Endothelial cell of umbilical vein (primary cell): ENCODE measurements at regions of chr11 and their contacts with region 1.

Region 1: DNA sequence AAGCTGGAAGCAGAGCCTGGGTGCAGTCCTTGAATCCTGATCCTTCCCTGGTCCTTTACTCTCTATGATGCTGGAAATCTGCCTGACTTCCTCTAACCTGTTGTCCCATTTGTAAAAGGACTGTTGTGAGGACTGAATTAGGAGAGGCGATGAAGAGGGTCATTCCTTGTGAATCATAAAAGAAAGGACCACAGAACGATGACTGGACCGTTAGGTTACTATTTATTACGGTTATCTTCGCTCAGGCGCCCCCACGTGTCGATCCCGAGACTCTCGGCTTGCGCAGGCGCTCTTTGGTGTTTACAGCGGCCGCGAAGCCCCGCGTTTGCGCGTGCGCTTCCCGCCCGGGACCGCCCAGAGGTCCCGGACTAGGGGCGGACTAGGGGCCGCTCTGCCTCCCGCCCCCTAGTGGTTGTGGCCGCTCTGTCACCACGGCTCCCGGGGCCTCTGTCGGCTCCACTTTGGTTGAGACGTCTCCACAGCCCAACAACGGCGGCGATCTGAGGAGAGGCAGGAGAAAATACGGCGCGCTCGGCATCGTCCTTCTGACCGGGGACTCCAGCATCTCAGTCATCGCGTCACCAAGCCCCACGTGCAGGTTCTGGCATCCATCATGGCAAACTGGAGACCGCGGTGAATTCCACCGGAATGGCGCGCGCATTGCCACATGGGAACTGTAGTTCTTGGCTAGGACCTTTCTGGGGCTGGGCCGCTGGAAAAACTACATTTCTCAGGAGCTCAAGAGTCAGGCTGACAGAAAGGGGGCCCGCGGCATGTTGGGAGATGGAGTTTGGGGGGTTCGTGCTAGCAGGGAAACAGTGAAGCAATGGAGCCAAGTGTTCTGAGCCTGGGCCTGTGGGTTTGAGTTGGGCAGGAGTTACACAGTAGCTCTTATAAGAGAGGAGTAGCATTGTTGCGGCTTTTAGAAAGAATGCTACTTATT is at the start of gene STARD10:
- DNase-seq: peak; percentile 96
- H3K4me3 ChIP-seq: peak within 1 kb of the TSS; percentile 66 to 85 (median 71)
- H3K27ac ChIP-seq: peak within 1 kb of the TSS; percentile 84
- H3K4me1 ChIP-seq: peaks cover 3% of the 10 kb centered on the region
- H3K27me3 ChIP-seq: no peaks in the 10 kb centered on the region
- CTCF ChIP-seq: peak; percentile 99
- POLR2A ChIP-seq: peak; percentile 75
- total RNA-seq, gene STARD10: 14.4 and 16.1 TPM in 2 replicates

Region 2: DNA sequence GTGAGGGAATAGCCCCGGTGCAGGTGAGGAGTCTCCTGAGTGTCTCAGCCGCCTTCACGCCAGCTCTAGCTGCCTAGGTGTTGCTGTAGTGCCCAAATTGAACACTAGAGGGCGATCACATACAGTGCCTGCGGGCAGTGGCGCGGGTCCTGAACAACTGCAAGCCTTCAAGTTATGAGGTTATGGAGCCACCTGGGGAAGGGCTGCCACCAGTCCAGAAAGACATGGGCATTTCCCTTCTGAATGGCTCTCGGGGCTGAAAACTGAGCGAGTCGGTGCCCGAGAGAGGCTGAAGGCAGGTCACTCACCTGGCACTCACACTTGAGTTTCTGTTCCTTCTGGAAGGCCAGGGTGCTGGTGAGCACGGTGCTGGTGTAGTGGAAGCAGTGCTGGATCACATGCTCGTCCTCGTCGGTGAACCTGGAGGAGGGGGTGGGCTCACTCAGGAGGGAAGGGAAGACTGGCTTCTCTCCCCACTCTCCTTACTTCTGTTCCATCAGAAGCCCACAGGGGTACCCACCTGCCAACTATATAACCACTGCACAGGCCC is 207.9 kb before region 1 on chr11:
- CTCF ChIA-PET with region 1: no interaction called
- POLR2A ChIA-PET with region 1: no interaction called
- dilution Hi-C with region 1: no loop called
- intact Hi-C with region 1: loop called (anchors 5 kb)
- DNase-seq: peak; percentile 69
- H3K4me3 ChIP-seq: no peak overlapping the region
- H3K27ac ChIP-seq: no peak overlapping the region
- H3K4me1 ChIP-seq: no peaks in the 10 kb centered on the region
- H3K27me3 ChIP-seq: peaks cover 2 to 6% of the 10 kb centered on the region in 2 experiments
- CTCF ChIP-seq: peak; percentile 83 to 86
- POLR2A ChIP-seq: no peak

Region 3: DNA sequence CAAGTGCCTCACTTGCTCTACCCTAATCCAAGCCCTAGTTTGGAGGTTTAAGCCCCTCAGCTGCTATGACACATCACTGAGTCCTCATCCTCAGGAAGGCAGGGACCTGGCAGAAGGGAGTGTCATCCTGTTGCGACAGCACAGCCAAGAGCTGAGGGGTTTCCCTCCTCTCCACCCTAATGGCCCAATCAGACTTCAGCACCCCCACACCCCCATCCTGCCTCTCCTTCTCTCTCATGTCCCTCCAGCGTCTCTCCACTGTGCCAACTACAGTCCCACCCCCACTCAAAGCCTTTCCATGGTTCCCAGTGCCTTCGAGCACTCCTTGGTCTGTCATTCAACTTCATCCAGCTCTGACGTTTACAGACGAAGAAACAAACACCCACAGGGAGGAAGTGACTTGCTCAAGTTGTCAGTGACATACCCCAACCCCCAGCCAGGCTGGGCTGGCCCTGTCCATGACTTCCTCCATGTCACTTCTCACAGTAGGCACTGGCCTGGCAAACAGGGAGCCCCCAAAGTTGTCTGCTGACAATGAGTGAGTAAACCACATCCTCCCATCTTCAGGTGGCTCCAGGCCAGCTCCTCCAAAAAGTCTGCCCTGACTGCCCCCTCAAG is 57.1 kb before region 1 on chr11:
- CTCF ChIA-PET with region 1: interaction called, 10 read pairs
- POLR2A ChIA-PET with region 1: no interaction called
- dilution Hi-C with region 1: no loop called
- intact Hi-C with region 1: no loop called
- DNase-seq: peak; percentile 47
- H3K4me3 ChIP-seq: no peak overlapping the region
- H3K27ac ChIP-seq: peak overlapping the region; percentile 69
- H3K4me1 ChIP-seq: peaks cover 20% of the 10 kb centered on the region
- H3K27me3 ChIP-seq: no peaks in the 10 kb centered on the region
- CTCF ChIP-seq: no peak
- POLR2A ChIP-seq: no peak

Region 4: DNA sequence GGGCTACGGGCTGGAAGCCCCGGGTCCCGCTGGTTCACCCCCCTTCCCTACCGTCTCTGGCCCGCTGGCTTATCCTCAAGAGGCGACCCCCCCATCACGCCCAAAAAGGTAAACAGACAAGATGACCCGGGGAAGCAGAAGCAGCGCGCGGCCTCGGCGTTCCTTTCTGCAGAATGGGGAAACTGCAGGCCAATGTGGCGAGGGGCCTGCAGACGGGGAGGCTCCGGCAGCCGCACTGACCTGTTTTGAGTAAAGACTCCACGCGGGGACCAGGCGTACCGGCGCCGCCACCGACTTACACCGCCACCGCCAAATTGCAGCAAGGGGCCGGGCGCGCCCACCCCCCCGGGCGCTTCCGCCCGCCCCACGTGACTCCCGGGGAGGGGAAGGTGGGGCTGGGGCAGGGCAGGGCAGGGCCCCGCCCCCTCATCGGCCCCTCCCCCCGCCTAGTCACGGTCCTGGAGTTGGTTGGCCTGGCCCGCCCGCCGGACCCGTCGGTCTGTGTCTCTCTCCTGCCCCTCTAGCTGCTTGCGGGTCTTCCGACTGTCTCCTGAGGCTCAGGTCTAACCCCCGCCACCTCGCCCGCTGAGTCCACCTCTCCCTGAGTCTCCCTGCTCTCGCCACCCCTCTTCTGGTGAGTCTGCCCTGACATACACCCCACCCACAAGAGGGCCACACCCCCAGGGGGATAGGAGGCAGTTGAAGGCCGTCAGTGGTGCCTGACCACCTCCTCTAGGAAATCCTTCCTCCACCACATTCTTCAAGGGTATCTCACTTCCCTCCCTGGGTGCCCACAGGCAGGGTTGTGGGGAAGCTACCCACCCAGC is 41.4 kb before region 1 on chr11 and contains the start of gene ARAP1:
- CTCF ChIA-PET with region 1: interaction called, 5 read pairs
- POLR2A ChIA-PET with region 1: no interaction called
- dilution Hi-C with region 1: no loop called
- intact Hi-C with region 1: loop called (anchors 1 kb)
- DNase-seq: peak; percentile 64
- H3K4me3 ChIP-seq: peak within 1 kb of the TSS; percentile 59 to 77 (median 62)
- H3K27ac ChIP-seq: peak within 1 kb of the TSS; percentile 21
- H3K4me1 ChIP-seq: peaks cover 12% of the 10 kb centered on the region
- H3K27me3 ChIP-seq: no peaks in the 10 kb centered on the region
- CTCF ChIP-seq: no peak
- POLR2A ChIP-seq: peak; percentile 42
- total RNA-seq, gene ARAP1: 66.2 and 78.3 TPM in 2 replicates

Region 5: DNA sequence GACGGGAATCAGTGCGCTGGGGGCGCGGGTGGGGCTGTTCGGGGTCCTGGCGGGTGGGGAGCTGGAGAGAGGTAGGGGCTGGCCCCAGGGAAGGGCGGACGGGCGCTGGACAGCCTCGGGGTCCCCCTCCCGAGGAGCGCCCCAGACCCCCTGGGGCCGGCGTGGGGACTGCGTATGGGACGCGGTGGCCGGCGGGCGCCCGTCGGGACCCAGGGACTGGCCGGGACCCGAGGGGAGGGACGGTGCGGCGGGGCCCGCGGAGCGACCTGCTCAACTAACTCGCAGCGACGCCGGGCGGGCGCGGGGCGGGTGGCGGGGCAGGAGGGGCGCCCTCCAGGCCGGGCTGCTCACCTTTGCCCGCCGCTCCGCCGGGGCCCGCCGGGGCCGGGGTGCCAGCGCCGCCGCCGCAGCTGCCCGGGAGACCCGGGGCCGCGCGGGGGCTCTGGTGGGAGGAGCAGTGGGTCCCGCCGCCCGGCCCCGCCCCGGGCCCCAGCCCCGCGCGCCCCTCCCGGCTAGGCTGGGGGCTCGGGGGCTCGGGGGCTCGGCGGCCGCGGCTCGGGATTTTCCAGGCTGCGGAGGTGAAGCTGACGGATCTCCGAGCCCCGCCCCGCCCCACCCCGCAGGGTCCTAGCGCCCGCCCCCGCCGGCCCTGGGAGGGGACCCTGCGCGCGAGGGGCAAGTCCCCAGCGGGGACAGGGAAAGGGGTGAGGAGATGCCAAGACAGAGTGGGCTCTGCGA is 12.2 kb before region 1 on chr11:
- CTCF ChIA-PET with region 1: interaction called, 16 read pairs
- POLR2A ChIA-PET with region 1: no interaction called
- dilution Hi-C with region 1: no loop called
- intact Hi-C with region 1: no loop called
- DNase-seq: no peak
- H3K4me3 ChIP-seq: peak overlapping the region in 1 of 3 experiments; percentile 50
- H3K27ac ChIP-seq: no peak overlapping the region
- H3K4me1 ChIP-seq: peaks cover 3% of the 10 kb centered on the region
- H3K27me3 ChIP-seq: no peaks in the 10 kb centered on the region
- CTCF ChIP-seq: no peak
- POLR2A ChIP-seq: no peak

Region 6: DNA sequence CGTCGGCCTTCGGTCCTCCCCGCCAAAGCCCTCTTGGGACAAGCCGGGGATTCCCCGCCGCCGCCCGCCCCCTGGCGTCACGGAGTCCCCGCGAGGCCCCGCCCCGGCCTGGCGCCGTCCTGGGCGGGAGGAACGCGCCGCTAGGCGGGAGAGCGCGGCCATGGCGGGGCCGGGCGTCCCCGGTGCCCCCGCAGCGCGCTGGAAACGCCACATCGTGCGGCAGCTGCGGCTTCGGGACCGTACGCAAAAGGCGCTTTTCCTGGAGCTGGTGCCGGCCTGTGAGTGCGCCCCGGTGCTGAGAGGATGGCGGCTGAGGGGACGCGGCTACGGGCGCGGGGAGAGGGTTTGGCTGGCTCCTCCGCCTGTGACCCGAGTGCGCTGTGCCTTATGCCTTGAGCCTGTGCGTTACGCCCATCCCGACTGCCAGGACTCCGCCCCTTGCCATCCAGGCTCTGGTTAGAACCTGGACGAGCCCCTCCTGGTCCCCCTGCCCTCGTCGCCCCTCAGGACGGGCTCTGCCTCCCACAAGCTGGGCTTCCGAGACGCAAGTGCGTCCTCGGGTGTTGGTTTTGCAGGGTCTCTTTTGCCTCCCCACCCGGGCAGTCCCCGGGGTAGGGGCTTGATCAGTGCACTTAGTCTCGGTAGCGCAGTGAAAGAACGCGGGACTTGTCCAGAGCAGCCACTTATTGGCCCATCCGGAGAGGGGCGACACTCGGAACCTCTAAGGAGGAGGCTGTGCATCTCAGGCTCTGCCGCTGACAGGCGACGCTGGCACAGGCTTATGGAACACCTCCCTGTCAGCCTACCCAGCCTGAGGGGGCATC is 20.8 kb after region 1 on chr11 and contains the start of gene ATG16L2:
- CTCF ChIA-PET with region 1: interaction called, 25 read pairs
- POLR2A ChIA-PET with region 1: no interaction called
- dilution Hi-C with region 1: no loop called
- intact Hi-C with region 1: loop called (anchors 1 kb)
- DNase-seq: peak; percentile 91
- H3K4me3 ChIP-seq: peak within 1 kb of the TSS; percentile 17 to 88 (median 56)
- H3K27ac ChIP-seq: peak within 1 kb of the TSS; percentile 67
- H3K4me1 ChIP-seq: peaks cover 31% of the 10 kb centered on the region
- H3K27me3 ChIP-seq: no peaks in the 10 kb centered on the region
- CTCF ChIP-seq: no peak
- POLR2A ChIP-seq: peak; percentile 68
- total RNA-seq, gene ATG16L2: 24.7 and 26.5 TPM in 2 replicates

Region 7: DNA sequence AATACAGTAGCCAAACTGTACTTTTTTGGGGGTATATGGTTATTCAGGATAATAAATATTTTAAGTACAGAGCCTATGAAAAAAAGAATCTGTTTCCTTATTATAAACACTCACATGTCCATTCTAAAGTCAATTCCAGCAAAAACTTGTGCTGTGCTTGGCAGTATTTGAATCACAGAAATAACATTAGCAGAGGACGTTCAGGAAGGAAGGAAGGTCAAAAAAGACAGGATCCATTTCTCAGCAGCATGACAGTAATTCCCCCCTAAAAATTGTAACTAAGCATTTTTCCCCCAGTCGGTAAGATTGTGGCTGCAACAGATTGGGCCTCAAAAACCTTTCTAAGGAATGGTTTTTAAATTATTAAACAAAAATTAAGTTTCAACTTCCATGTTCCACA is 145.3 kb after region 1 on chr11:
- CTCF ChIA-PET with region 1: no interaction called
- POLR2A ChIA-PET with region 1: no interaction called
- dilution Hi-C with region 1: no loop called
- intact Hi-C with region 1: no loop called
- DNase-seq: peak; percentile 73
- H3K4me3 ChIP-seq: no peak overlapping the region
- H3K27ac ChIP-seq: no peak overlapping the region
- H3K4me1 ChIP-seq: peaks cover 29% of the 10 kb centered on the region
- H3K27me3 ChIP-seq: no peaks in the 10 kb centered on the region
- CTCF ChIP-seq: no peak
- POLR2A ChIP-seq: no peak